Activated CD4-positive, alpha-beta memory T cell treated with anti-CD3 and anti-CD28 coated beads for 36 hours (primary cell): ENCODE measurements at regions of chr9 and their contacts with region 1.

Region 1: DNA sequence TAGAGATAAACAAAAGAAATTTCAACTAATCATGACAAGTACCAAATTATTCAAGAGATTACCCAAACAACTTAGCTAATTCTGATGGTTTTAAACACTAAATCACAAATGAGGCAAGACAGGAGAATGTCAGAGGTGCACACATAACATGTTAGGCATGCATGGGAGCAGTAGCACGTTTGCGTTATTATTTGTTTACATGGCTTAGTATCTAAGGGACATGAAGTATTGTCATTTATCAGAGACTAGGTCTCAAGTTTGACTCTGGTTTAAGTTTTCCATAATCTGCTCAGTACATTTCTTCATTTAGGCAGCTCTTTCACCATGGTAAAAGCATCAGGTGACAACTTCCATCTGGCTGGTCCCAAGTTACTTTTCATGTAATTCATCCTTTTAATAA is 244.1 kb upstream of the TNC start:
- DNase-seq: no peak
- H3K4me3 Mint-ChIP-seq: no peak overlapping the region
- H3K27ac Mint-ChIP-seq: no peak overlapping the region
- H3K4me1 Mint-ChIP-seq: no peaks in the 10 kb centered on the region
- H3K27me3 Mint-ChIP-seq: peaks cover 5% of the 10 kb centered on the region

Region 2: DNA sequence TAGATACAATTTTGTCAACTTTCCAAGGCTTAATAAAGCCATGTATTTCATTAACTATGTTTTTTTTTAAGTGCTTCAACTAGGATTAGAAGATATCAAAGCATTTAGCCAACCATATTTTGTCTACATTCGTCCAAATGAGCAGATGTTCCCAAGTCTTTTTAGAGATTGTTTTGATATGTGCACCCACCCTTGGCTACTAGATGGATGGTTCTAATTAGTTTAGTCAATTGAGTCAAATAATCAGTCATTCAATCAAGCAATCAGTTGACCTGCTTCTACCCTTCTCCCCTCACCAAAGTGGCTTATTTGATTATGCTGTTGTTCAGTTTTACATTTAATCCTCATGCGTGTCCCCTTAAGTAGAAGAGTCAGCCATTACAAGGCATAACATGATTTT is 75.3 kb after region 1 on chr9:
- CTCF ChIA-PET with region 1: no interaction called
- POLR2A ChIA-PET with region 1: no interaction called
- intact Hi-C with region 1: loop called (anchors 2 kb)
- DNase-seq: no peak
- H3K4me3 Mint-ChIP-seq: no peak overlapping the region
- H3K27ac Mint-ChIP-seq: no peak overlapping the region
- H3K4me1 Mint-ChIP-seq: no peaks in the 10 kb centered on the region
- H3K27me3 Mint-ChIP-seq: peaks cover 4% of the 10 kb centered on the region

Region 3: GRCh38 chr9:116420993-116421538 is 1059.0 kb after region 1 on chr9:
- CTCF ChIA-PET with region 1: no interaction called
- POLR2A ChIA-PET with region 1: no interaction called
- intact Hi-C with region 1: no loop called
- DNase-seq: no peak
- H3K4me3 Mint-ChIP-seq: no peak overlapping the region
- H3K27ac Mint-ChIP-seq: no peak overlapping the region
- H3K4me1 Mint-ChIP-seq: no peaks in the 10 kb centered on the region
- H3K27me3 Mint-ChIP-seq: no peaks in the 10 kb centered on the region